ENCODE measurements at regions of chr16 and their contacts with region 1.

Region 1: GRCh38 chr16:56356276-56357240 is 68.8 kb downstream of the AMFR start:
- DNase-seq: peak; percentile 80 to 88 (median 84)
- ATAC-seq: peak; percentile 98
- H3K4me3 ChIP-seq: no peak overlapping the region
- H3K27ac ChIP-seq: peak overlapping the region; percentile 47; the same call in 2 of the 3 replicates
- H3K4me1 ChIP-seq: peaks cover 11 to 28% of the 10 kb centered on the region in 2 experiments
- H3K27me3 ChIP-seq: peaks cover 3 to 12% of the 10 kb centered on the region in 2 experiments; a peak in 3 of 5 replicates
- CTCF ChIP-seq: peak; percentile 88 to 94 (median 92)
- EP300 ChIP-seq: no peak
- POLR2A ChIP-seq: no peak
- RAD21 ChIP-seq: peak; percentile 72 to 80

Region 2: GRCh38 chr16:56425439-56425832 is 68.9 kb after region 1 on chr16 and contains the start of gene AMFR:
- CTCF ChIA-PET with region 1: no interaction called
- POLR2A ChIA-PET with region 1: no interaction called
- in situ Hi-C with region 1: no loop called
- intact Hi-C with region 1: loop called (anchors 2 kb)
- DNase-seq: peak; percentile 87 to 93 (median 92)
- ATAC-seq: peak; percentile 92
- H3K4me3 ChIP-seq: peak within 1 kb of the TSS; percentile 90
- H3K27ac ChIP-seq: peak within 1 kb of the TSS; percentile 85
- H3K4me1 ChIP-seq: peaks cover 23 to 37% of the 10 kb centered on the region in 2 experiments
- H3K27me3 ChIP-seq: no peaks in the 10 kb centered on the region
- CTCF ChIP-seq: peak in 2 of 3 experiments; percentile 57 to 82; a peak in 4 of 6 replicates
- EP300 ChIP-seq: no peak
- POLR2A ChIP-seq: no peak
- RAD21 ChIP-seq: peak in 1 of 2 experiments; percentile 52; a peak in 2 of 4 replicates
- polyA plus RNA-seq, gene AMFR: 15.6 to 27.3 TPM

Region 3: GRCh38 chr16:56519459-56520250 is 163.1 kb after region 1 on chr16 and contains the start of gene BBS2:
- CTCF ChIA-PET with region 1: no interaction called
- POLR2A ChIA-PET with region 1: no interaction called
- in situ Hi-C with region 1: no loop called
- intact Hi-C with region 1: loop called (anchors 10 kb)
- DNase-seq: peak; percentile 81 to 93 (median 90)
- ATAC-seq: peak; percentile 99
- H3K4me3 ChIP-seq: peak within 1 kb of the TSS; percentile 91
- H3K27ac ChIP-seq: peak within 1 kb of the TSS; percentile 62
- H3K4me1 ChIP-seq: peaks cover 10 to 13% of the 10 kb centered on the region in 2 experiments
- H3K27me3 ChIP-seq: peaks cover 0 to 4% of the 10 kb centered on the region in 2 experiments; a peak in 1 of 5 replicates
- CTCF ChIP-seq: no peak
- EP300 ChIP-seq: peak; percentile 3; the same call in 1 of the 2 replicates
- POLR2A ChIP-seq: peak; percentile 71
- RAD21 ChIP-seq: no peak
- polyA plus RNA-seq, gene BBS2: 4.2 to 4.4 TPM

Region 4: DNA sequence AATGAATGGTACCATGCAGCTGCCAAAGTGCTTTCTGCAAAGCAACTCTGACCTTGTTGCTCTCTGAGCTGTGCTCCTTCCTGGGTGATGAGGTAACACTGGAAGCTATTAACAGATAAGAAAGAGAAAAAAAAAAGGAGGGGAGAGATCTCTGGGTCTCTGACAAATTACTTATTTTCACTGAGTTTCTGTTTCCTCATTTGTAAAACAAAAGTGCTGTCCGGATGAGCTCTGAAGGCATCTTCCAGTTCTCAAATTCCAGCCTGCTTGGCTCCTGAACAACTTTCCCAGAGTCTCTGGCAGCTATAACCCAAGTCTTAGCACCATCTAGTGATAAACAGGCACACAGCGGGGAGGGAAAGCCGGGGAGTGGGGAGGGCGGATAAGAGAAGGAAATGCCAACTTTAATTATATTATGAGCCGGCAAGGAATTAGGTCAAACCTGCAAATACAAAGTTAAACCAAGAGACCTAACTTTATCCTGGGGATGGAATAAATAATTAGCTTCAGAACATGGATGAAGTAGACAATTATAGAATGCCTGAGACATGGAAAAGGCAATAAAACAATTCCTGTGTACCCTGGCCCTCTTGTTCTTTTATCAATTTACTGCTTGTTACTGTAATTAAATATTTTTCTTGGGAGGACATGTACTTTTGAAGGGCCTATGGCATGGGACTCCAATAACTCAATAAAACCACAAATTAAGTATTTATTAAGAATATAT is 1507.0 kb after region 1 on chr16:
- CTCF ChIA-PET with region 1: no interaction called
- POLR2A ChIA-PET with region 1: no interaction called
- in situ Hi-C with region 1: no loop called
- intact Hi-C with region 1: no loop called
- DNase-seq: peak in 2 of 4 experiments; percentile 46 to 55
- ATAC-seq: peak; percentile 78
- H3K4me3 ChIP-seq: no peak overlapping the region
- H3K27ac ChIP-seq: no peak overlapping the region
- H3K4me1 ChIP-seq: peaks cover 3 to 14% of the 10 kb centered on the region in 2 experiments; a peak in 3 of 5 replicates
- H3K27me3 ChIP-seq: peaks cover 6 to 10% of the 10 kb centered on the region in 2 experiments; a peak in 2 of 5 replicates
- CTCF ChIP-seq: peak; percentile 56 to 77 (median 57)
- EP300 ChIP-seq: no peak
- POLR2A ChIP-seq: no peak
- RAD21 ChIP-seq: peak; percentile 84 to 89